ENCODE measurements at regions of chr18 and their contacts with region 1.

Region 1: GRCh38 chr18:76405681-76406356 is 89.2 kb downstream of the ZNF516 start:
- DNase-seq: peak; percentile 35 to 53
- ATAC-seq: peak; percentile 58 to 59
- H3K4me3 ChIP-seq: no peak overlapping the region
- H3K27ac ChIP-seq: no peak overlapping the region
- H3K4me1 ChIP-seq: peaks cover 2 to 8% of the 10 kb centered on the region in 2 donors
- H3K27me3 ChIP-seq: no peaks in the 10 kb centered on the region
- CTCF ChIP-seq: peak; percentile 52 to 79 (median 67)
- POLR2A ChIP-seq: no peak

Region 2: GRCh38 chr18:76349067-76349715 is 56.6 kb before region 1 on chr18:
- in situ Hi-C with region 1: no loop called
- intact Hi-C with region 1: no loop called
- DNase-seq: peak; percentile 17 to 43
- ATAC-seq: peak; percentile 43 to 63
- H3K4me3 ChIP-seq: peak overlapping the region in 2 of 4 donors; percentile 9 to 14
- H3K27ac ChIP-seq: no peak overlapping the region
- H3K4me1 ChIP-seq: peaks cover 4 to 5% of the 10 kb centered on the region in 2 donors
- H3K27me3 ChIP-seq: no peaks in the 10 kb centered on the region
- CTCF ChIP-seq: peak; percentile 56 to 87 (median 82)
- POLR2A ChIP-seq: no peak

Region 3: GRCh38 chr18:76686737-76687262 is 281.0 kb after region 1 on chr18:
- in situ Hi-C with region 1: loop called in 1 of 4 experiments (anchors 10 kb)
- intact Hi-C with region 1: no loop called
- DNase-seq: peak in 1 of 2 donors; percentile 50
- ATAC-seq: peak; percentile 80 to 92
- H3K4me3 ChIP-seq: no peak overlapping the region
- H3K27ac ChIP-seq: peak overlapping the region in 1 of 4 donors; percentile 31
- H3K4me1 ChIP-seq: peaks cover 0 to 3% of the 10 kb centered on the region in 2 donors
- H3K27me3 ChIP-seq: peaks cover 0 to 12% (median 3%) of the 10 kb centered on the region in 3 donors
- CTCF ChIP-seq: peak; percentile 17 to 56 (median 54)
- POLR2A ChIP-seq: no peak